ENCODE measurements at regions of chr22 and their contacts with region 1.

Region 1: DNA sequence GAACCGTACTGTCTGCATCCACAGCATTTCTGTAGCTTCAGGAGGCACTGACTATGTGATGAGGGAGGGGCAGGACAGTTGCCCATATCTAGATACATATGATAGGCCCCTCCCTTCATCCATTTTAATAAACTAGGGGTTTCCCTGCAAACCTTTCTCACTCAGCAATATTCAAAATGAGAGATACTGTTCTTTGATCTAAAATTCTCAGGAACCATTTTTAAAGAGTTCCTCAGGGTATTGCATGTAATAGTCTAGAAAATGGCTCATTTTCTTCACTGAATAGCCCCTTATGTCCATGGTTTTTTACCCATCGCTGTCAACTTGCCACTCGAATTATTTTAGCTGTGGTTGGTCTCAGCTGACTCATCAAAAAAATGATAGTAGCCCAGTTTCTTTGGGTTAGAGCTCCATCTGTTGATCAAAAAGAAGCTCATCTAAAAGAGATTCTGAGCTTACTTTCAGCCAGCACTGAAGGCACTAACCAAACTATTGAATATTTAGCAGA is 37.0 kb upstream of the DNAJB7 start:
- DNase-seq: peak; percentile 69
- CTCF ChIP-seq: peak; percentile 49

Region 2: GRCh38 chr22:40679964-40680818 is 218.7 kb before region 1 on chr22:
- CTCF ChIA-PET with region 1: interaction called, 25 read pairs
- POLR2A ChIA-PET with region 1: no interaction called
- DNase-seq: no peak
- CTCF ChIP-seq: no peak

Region 3: DNA sequence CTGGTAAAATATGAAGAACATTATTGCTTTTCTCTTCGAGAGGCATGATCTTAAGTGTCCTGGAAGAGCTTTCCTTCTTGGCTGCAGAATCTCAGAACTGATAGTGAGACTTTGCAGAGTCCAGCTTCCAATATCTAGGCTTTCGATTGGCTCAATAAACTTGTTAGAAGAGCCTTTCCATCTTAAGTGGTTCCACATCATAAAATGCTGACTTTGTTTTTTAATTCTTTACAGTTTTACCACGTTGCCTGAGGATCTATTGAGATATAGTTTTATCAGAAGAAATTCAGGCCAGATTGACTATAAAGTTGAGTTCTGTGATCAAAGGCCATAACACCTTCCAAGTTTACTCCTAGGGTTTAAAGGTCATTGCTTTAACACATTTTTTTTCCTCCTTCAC is 21.4 kb before region 1 on chr22:
- CTCF ChIA-PET with region 1: interaction called, 10 read pairs
- POLR2A ChIA-PET with region 1: no interaction called
- DNase-seq: no peak
- CTCF ChIP-seq: no peak

Region 4: DNA sequence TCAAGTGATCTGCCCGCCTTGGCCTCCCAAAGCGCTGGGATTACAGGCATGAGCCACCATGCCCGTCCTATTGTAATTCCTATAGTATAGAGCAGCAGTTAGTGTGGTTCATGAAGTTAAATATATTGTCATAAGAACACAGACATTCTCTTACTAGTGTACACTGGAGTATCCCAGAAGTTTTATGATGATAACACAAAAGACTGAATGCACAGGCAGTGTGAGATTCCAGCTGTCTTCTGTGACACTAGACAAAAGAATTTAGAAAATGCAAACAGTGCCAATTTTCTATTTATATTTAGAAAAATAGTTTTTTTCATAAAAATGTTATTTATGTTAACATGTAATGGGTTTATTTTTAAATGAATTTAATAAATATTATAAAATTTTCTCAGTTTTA is 12.9 kb after region 1 on chr22:
- CTCF ChIA-PET with region 1: interaction called, 17 read pairs
- POLR2A ChIA-PET with region 1: no interaction called
- DNase-seq: no peak
- CTCF ChIP-seq: no peak